ENCODE measurements at regions of chr14 and their contacts with region 1.

Region 1: GRCh38 chr14:35883677-35884293 is 57.6 kb downstream of the BRMS1L start:
- DNase-seq: no peak
- H3K4me3 ChIP-seq: no peak overlapping the region
- H3K27ac ChIP-seq: no peak overlapping the region
- H3K4me1 ChIP-seq: peaks cover 0 to 7% (median 5%) of the 10 kb centered on the region in 3 donors
- H3K27me3 ChIP-seq: no peaks in the 10 kb centered on the region
- CTCF ChIP-seq: peak in 5 of 6 experiments; percentile 41 to 69 (median 49)
- POLR2A ChIP-seq: no peak

Region 2: GRCh38 chr14:36057452-36058141 is 173.8 kb after region 1 on chr14:
- intact Hi-C with region 1: loop called (anchors 10 kb)
- DNase-seq: no peak
- H3K4me3 ChIP-seq: no peak overlapping the region
- H3K27ac ChIP-seq: no peak overlapping the region
- H3K4me1 ChIP-seq: peaks cover 0 to 5% (median 0%) of the 10 kb centered on the region in 3 donors
- H3K27me3 ChIP-seq: peaks cover 0 to 8% (median 0%) of the 10 kb centered on the region in 4 donors
- CTCF ChIP-seq: no peak
- POLR2A ChIP-seq: no peak

Region 3: DNA sequence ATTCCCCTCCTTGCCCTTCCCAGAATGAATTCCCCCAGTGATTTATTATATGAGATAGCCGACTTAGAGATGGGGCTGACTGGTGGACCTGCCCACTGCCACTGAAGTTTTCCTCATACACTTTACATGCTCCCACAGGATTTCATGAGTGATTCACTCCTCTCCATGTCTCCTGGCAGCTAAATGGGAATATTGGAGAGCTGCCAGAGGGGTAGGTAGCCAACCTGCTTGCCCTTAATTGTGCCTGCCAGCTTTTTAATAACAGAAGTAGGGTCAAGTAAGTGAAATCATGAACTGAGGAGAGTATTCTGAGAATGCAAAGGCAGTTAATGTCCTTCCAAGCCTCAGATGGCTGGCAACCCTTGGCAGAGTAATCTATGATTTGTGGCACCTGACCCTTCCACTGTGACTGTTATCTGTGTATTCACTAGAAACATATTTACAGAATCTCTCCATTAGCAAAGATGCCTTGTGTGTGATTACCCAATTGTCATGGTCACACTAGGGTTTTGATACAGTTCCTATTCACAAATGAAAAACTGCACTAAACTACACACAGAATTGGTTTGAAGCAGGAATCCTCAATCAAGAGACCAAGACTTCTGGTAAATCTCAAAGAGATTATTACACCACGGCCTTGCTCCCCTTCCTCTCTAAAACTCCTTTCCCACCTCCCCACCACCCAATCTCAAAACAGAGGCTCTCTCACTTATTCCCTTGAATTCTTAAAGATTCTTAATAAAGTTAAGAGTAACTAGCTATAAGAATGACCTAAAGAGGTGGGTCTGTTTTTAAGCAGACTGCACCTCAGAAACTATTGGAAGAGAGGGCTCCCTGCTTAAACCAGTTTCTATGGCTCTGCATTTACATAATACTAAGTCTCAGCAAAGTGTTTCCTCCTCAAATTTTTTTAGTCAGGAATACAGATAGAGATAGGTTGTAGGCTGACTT is 619.0 kb after region 1 on chr14:
- intact Hi-C with region 1: no loop called
- DNase-seq: no peak
- H3K4me3 ChIP-seq: no peak overlapping the region
- H3K27ac ChIP-seq: no peak overlapping the region
- H3K4me1 ChIP-seq: peaks cover 9 to 29% (median 19%) of the 10 kb centered on the region in 3 donors
- H3K27me3 ChIP-seq: peaks cover 21 to 100% (median 40%) of the 10 kb centered on the region in 4 donors
- CTCF ChIP-seq: no peak
- POLR2A ChIP-seq: no peak

Region 4: GRCh38 chr14:36604757-36605505 is 721.1 kb after region 1 on chr14:
- intact Hi-C with region 1: loop called (anchors 10 kb)
- DNase-seq: no peak
- H3K4me3 ChIP-seq: no peak overlapping the region
- H3K27ac ChIP-seq: no peak overlapping the region
- H3K4me1 ChIP-seq: peaks cover 0 to 15% (median 0%) of the 10 kb centered on the region in 3 donors
- H3K27me3 ChIP-seq: peaks cover 0 to 39% (median 0%) of the 10 kb centered on the region in 4 donors
- CTCF ChIP-seq: peak; percentile 58 to 79 (median 72)
- POLR2A ChIP-seq: no peak